ENCODE measurements at regions of chr5 and their contacts with region 1.

Region 1: GRCh38 chr5:154202379-154203260 is 12.1 kb downstream of the GALNT10 start:
- DNase-seq: peak; percentile 40
- H3K4me3 Mint-ChIP-seq: peak overlapping the region; percentile 57
- H3K27ac Mint-ChIP-seq: peak overlapping the region; percentile 73
- H3K4me1 Mint-ChIP-seq: peaks cover 49% of the 10 kb centered on the region
- H3K27me3 Mint-ChIP-seq: no peaks in the 10 kb centered on the region

Region 2: DNA sequence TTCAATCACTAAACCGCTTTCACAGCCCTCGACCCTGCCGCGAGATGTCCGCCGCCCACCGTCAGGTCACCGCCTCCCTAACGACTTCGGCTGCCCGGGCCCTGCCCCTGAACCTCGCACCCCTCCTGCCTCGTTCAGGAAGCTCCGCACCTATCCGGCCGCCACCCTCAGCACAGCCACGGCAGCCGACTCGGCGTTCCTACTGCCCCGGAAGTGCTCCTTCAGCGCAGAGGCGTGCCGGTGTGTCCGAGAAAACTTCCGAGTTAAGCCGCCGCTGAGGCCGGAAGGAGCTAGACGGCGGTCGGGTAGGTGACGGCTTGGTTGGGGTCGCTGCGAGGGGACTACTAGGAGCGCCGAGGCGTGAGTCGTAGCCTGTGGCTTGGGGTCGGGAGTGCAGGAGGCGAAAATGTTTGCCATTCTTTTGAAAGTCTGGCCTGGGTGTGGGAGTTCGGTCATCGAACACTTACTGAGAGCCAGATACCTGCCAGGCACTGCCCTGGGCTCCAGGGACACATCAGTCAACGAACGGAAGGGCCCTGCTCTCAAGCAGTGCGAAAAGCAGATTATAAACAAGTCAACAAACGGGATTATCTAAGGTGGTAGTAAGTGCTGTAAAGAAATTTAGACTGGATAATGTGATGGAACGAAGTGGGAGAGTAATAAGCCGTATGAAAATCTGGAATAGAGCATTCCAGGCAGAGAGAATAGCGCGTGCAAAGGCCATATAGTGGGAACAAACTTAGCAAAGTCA is 163.7 kb before region 1 on chr5 and contains the starts of genes FAM114A2 and MFAP3:
- intact Hi-C with region 1: no loop called
- DNase-seq: peak; percentile 87
- H3K4me3 Mint-ChIP-seq: peak within 1 kb of the TSS; percentile 98
- H3K27ac Mint-ChIP-seq: peak within 1 kb of the TSS; percentile 94
- H3K4me1 Mint-ChIP-seq: peaks cover 37% of the 10 kb centered on the region
- H3K27me3 Mint-ChIP-seq: no peaks in the 10 kb centered on the region
- total RNA-seq, gene FAM114A2: 23.6 and 31.2 TPM in 2 replicates
- total RNA-seq, gene MFAP3: 17.1 and 21.8 TPM in 2 replicates

Region 3: DNA sequence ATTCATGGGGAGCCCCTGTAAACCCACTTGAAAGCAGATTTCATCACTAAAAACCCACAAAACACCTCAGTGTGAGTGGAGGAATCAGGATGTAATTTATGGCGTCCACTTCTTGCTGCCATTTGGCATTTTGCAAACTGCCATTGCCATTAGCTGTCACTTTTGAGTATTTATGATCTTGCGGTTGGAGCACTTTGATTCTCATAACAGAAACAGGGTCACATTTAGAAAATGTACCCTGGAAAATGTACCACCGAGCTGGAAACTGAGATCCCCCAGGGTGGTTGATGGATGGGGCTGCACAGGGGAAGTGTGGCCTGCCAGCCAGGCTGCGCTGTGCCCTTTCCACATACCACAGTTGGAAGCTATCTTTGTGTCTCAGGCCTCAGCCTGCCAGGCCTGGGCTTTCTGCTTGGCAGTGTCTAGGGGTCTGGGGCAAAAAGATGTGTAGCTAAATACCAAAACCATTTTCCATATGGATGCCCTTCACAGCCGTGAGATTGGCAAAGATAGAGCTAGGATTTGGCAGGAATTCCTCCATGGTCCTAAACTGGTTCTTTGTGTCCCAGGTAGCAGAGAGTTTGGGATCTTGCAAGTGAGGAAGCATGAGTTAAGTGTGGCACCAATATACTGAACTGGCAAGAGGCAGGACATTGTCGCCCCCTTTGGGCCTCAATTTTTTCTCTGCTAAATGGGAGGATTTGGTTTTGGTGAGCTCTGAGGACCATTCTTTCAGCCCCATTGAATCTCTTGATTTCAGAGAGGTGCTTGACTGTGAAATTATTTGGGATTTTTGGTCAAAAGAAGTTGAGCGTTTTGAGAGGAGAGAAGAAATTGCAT is 34.1 kb after region 1 on chr5:
- intact Hi-C with region 1: loop called (anchors 2 kb)
- DNase-seq: no peak
- H3K4me3 Mint-ChIP-seq: no peak overlapping the region
- H3K27ac Mint-ChIP-seq: no peak overlapping the region
- H3K4me1 Mint-ChIP-seq: peaks cover 29% of the 10 kb centered on the region
- H3K27me3 Mint-ChIP-seq: no peaks in the 10 kb centered on the region

Measured in activated T-helper 2 cell treated with anti-CD3 and anti-CD28 coated beads, Interferon-gamma antibody, Interleukin-2, Interleukin-4, amounts not matched to agents 10 μg/mL and 5 μg/mL and 100 μg/mL, durations not matched to agents 14 hours and 24 hours and 36 hours (primary cell).